Posterior cingulate gyrus (tissue), 11 donors: ENCODE measurements at regions of chr11 and their contacts with region 1.

Region 1: DNA sequence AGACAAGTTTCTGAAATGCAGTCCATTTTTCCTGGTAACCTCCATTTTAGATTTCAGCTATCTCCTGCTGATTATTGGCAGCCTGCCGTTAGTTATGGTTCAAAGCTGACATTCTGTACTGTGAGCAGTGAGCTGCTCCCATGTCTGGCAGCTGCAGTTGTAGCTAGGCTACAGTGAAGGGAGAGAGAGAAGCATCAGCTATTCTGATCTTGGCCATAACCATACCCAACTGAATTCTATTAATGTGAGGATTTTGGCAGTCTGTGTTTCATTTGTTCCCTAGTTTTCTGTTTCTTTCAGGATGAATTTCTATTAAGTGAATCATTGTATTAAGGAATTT is 33.4 kb downstream of the SIK2 start:
- DNase-seq: peak in 9 of 10 donors; percentile 14 to 87 (median 48)

Region 2: GRCh38 chr11:111735262-111736116 is 99.8 kb after region 1 on chr11:
- intact Hi-C with region 1: loop called (anchors 10 kb)
- DNase-seq: peak in 9 of 10 donors; percentile 67 to 95 (median 76)